Activated CD4-positive, alpha-beta T cell treated with anti-CD3 and anti-CD28 coated beads, Interleukin-2, amount 10 ng/mL, durations not matched to agents 24 days and 14 days (primary cell): ENCODE measurements at regions of chr1 and their contacts with region 1.

Region 1: GRCh38 chr1:8314346-8315280 is 3.3 kb upstream of the SLC45A1 start:
- DNase-seq: peak; percentile 83
- H3K4me3 Mint-ChIP-seq: peak overlapping the region; percentile 28
- H3K27ac Mint-ChIP-seq: no peak overlapping the region
- H3K4me1 Mint-ChIP-seq: peaks cover 14% of the 10 kb centered on the region
- H3K27me3 Mint-ChIP-seq: peaks cover 41% of the 10 kb centered on the region

Region 2: GRCh38 chr1:8026153-8026975 is 288.2 kb before region 1 on chr1 and contains the start of gene ERRFI1:
- intact Hi-C with region 1: loop called (anchors 1 kb)
- DNase-seq: peak; percentile 97
- H3K4me3 Mint-ChIP-seq: peak within 1 kb of the TSS; percentile 89
- H3K27ac Mint-ChIP-seq: peak within 1 kb of the TSS; percentile 76
- H3K4me1 Mint-ChIP-seq: peaks cover 10% of the 10 kb centered on the region
- H3K27me3 Mint-ChIP-seq: peaks cover 63% of the 10 kb centered on the region
- total RNA-seq, gene ERRFI1: 2.0 TPM in 2 replicates

Region 3: GRCh38 chr1:8348777-8349491 is 34.3 kb after region 1 on chr1:
- intact Hi-C with region 1: loop called (anchors 2 kb)
- DNase-seq: peak; percentile 90
- H3K4me3 Mint-ChIP-seq: no peak overlapping the region
- H3K27ac Mint-ChIP-seq: no peak overlapping the region
- H3K4me1 Mint-ChIP-seq: no peaks in the 10 kb centered on the region
- H3K27me3 Mint-ChIP-seq: no peaks in the 10 kb centered on the region